ENCODE measurements at regions of chr16 and their contacts with region 1.

Region 1: DNA sequence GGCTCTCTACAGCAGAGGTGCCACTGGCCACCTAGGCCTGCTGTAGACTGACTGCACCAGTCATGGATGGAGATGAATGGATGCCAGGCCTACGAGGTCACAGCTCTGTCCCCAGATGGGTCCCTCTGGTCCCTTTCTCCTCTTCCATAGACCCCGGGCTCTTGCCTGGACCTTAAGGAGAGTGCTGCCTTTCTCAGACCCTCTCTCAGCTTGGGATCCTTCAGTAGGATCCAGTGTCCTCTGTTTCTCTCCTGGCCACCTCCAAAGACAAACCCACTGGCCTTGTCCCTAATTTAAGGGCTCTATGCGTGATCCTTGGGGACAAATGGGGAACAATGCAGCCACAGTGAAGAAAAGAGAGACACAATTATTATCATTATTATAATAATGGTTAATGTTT is 189.3 kb upstream of the C16orf82 start:
- DNase-seq: no peak
- ATAC-seq: no peak
- H3K4me3 Mint-ChIP-seq: no peak overlapping the region
- H3K27ac Mint-ChIP-seq: no peak overlapping the region
- H3K4me1 Mint-ChIP-seq: no peaks in the 10 kb centered on the region
- H3K27me3 Mint-ChIP-seq: peaks cover 14% of the 10 kb centered on the region
- CTCF ChIP-seq: no peak

Region 2: DNA sequence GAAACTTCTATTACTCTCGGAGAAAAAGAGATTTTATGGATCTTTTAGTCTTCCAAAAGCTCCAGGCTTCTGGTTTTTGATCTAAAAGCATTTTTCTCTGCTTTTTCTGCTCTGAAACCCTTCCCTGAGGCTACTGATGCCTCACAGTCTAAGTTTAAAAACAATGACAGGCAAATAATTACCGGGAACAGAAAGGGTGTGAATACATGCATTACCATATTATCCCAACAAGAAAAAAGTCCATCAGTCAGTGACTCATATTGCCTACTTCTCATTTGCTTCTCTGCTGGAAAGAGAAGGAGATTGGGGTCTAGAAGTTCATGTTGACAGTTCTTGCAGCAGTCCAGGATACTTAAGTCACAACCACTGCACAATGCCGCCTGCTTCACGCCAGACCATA is 293.6 kb before region 1 on chr16:
- CTCF ChIA-PET with region 1: no interaction called
- POLR2A ChIA-PET with region 1: no interaction called
- intact Hi-C with region 1: no loop called
- DNase-seq: no peak
- ATAC-seq: no peak
- H3K4me3 Mint-ChIP-seq: no peak overlapping the region
- H3K27ac Mint-ChIP-seq: no peak overlapping the region
- H3K4me1 Mint-ChIP-seq: no peaks in the 10 kb centered on the region
- H3K27me3 Mint-ChIP-seq: peaks cover 34% of the 10 kb centered on the region
- CTCF ChIP-seq: no peak

Region 3: DNA sequence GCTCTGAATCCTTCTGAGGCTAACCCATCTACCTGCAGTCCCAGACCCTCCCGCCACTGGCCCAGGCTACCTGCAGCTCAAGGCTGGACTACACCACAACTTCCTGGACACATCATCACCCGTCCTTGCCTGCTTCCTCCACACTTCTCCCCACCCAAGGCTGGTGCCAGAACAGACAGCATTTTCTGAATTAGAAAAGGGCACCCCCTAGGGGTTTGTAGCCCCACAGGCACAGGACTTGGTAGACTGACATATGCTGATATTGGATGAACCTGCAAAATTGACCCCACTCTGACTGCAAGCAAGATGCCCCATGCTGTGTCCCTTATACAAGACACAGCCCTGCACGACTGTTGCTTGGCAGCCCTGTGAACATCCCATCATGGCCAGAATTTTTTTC is 82.2 kb before region 1 on chr16:
- CTCF ChIA-PET with region 1: no interaction called
- POLR2A ChIA-PET with region 1: no interaction called
- intact Hi-C with region 1: no loop called
- DNase-seq: peak; percentile 54
- ATAC-seq: peak; percentile 69
- H3K4me3 Mint-ChIP-seq: no peak overlapping the region
- H3K27ac Mint-ChIP-seq: no peak overlapping the region
- H3K4me1 Mint-ChIP-seq: no peaks in the 10 kb centered on the region
- H3K27me3 Mint-ChIP-seq: peaks cover 27% of the 10 kb centered on the region
- CTCF ChIP-seq: peak; percentile 58

Region 4: DNA sequence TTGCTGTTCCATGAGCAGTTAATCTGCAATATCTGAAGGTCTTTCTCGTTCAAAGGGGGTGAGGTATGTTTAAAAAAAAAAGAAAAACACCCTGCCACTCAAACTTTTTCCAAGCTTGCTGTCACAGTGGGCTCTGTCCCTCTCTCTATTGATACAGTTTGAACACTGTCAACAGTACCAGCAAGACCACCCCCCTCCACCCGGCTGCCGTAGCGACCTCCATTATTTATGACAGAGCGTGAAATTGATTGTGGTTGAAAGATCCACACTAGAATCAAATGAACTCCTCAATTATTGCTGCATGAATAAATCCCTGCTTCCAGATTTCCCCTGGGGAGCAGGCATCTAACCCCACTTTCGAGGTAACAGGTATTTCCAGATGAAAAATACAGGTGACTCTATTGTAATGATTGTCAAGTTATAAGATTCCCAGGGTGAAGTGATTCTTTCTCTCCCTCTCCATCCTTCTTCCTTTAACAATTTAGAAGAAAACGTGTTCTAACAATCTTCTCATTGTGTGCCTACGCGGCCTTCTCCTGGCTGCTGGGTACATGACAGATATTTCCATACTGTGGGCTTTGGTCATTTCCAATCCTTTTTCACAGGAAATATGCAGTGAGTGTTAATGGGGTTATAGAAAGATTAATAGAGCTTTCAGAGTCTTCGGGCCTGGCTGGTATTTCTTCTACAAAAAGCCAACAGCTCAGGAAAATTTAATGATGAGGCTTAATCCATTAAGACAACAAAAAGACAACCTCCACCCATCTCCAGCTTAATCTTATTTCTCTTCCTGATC is 53.6 kb after region 1 on chr16:
- CTCF ChIA-PET with region 1: no interaction called
- POLR2A ChIA-PET with region 1: no interaction called
- intact Hi-C with region 1: loop called (anchors 10 kb)
- DNase-seq: no peak
- ATAC-seq: no peak
- H3K4me3 Mint-ChIP-seq: no peak overlapping the region
- H3K27ac Mint-ChIP-seq: no peak overlapping the region
- H3K4me1 Mint-ChIP-seq: no peaks in the 10 kb centered on the region
- H3K27me3 Mint-ChIP-seq: no peaks in the 10 kb centered on the region
- CTCF ChIP-seq: no peak